ENCODE measurements at regions of chr15 and their contacts with region 1.

Region 1: GRCh38 chr15:91706322-91707032 is 147.0 kb upstream of the SLCO3A1 start:
- H3K4me3 ChIP-seq: no peak overlapping the region
- H3K27ac ChIP-seq: no peak overlapping the region
- H3K4me1 ChIP-seq: no peaks in the 10 kb centered on the region
- CTCF ChIP-seq: 0 out of 2 replicates have a peak, but pooled peaks have one; percentile 19

Region 2: DNA sequence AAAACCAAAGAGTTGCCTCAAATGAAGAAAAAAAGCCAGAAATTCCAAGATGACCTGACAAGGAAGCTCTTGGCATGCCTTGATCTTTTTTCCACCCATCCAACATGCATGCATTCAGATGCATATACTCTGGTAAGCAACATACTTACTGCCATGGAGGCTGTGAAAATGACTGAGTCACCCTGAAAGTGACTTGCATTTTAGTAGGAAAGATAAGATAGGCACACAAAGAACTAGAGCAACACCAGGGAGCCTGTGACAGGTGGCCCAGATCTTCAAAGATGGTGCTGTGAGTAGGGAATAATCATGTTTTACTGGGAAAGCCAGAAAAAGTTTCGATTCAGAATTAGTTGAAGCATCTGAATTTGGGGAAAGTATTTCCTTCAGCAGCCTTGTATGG is 38.1 kb before region 1 on chr15:
- CTCF ChIA-PET with region 1: interaction called, 15 read pairs
- POLR2A ChIA-PET with region 1: no interaction called
- H3K4me3 ChIP-seq: no peak overlapping the region
- H3K27ac ChIP-seq: no peak overlapping the region
- H3K4me1 ChIP-seq: no peaks in the 10 kb centered on the region
- CTCF ChIP-seq: no peak

Region 3: GRCh38 chr15:91694831-91695210 is 11.7 kb before region 1 on chr15:
- CTCF ChIA-PET with region 1: interaction called, 50 read pairs
- POLR2A ChIA-PET with region 1: no interaction called
- H3K4me3 ChIP-seq: no peak overlapping the region
- H3K27ac ChIP-seq: no peak overlapping the region
- H3K4me1 ChIP-seq: no peaks in the 10 kb centered on the region
- CTCF ChIP-seq: no peak

Region 4: DNA sequence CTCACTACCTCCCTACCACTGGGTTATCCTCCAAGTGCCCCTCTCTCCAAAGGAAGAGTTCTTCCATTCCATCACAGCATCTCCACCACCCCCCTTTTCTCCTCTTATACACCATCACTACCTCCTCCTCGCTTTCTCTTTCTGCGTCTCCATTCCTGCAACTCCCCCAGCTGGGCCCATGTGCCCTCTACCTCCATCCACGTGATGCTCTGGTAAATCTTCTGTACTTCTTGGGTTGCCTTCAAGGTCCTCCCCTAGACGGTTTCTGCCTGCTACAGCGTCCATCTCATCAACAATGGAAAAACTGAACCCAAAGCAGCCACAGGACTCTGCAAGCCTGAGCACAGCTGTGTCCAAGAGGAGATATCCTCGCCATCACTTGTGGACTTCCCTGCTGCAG is 17.5 kb after region 1 on chr15:
- CTCF ChIA-PET with region 1: interaction called, 38 read pairs
- POLR2A ChIA-PET with region 1: no interaction called
- H3K4me3 ChIP-seq: no peak overlapping the region
- H3K27ac ChIP-seq: no peak overlapping the region
- H3K4me1 ChIP-seq: no peaks in the 10 kb centered on the region
- CTCF ChIP-seq: no peak

Region 5: GRCh38 chr15:91852741-91853510 is 146.4 kb after region 1 on chr15:
- CTCF ChIA-PET with region 1: interaction called, 12 read pairs
- POLR2A ChIA-PET with region 1: no interaction called
- H3K4me3 ChIP-seq: peak overlapping the region; percentile 63
- H3K27ac ChIP-seq: peak overlapping the region; percentile 79
- H3K4me1 ChIP-seq: peaks cover 41% of the 10 kb centered on the region
- CTCF ChIP-seq: peak; percentile 69

Region 6: DNA sequence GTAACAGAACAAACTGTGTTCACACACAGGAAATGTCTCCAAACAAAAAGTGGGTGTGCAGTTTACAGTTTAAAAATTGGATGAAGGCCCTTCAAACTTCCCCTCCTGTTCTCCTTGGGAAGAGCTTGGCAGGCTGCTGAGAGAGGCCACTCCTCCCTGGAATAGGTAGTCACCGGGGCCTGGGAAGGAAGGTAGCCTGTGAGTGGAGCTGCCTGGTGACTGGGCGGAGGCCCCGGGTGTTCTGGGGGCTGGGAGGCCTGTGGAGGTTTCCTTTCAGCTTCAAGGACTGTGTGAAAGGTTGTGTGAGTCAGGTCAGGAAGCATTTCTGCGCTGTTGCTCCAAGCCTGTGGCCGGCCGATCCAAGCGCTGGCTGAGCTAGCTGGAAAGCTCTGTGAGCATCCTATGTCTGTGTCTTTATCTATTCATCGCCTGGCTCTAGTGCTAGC is 161.1 kb after region 1 on chr15:
- CTCF ChIA-PET with region 1: no interaction called
- POLR2A ChIA-PET with region 1: no interaction called
- H3K4me3 ChIP-seq: no peak overlapping the region
- H3K27ac ChIP-seq: no peak overlapping the region
- H3K4me1 ChIP-seq: no peaks in the 10 kb centered on the region; the same call in 1 of the 2 replicates
- CTCF ChIP-seq: no peak

Region 7: DNA sequence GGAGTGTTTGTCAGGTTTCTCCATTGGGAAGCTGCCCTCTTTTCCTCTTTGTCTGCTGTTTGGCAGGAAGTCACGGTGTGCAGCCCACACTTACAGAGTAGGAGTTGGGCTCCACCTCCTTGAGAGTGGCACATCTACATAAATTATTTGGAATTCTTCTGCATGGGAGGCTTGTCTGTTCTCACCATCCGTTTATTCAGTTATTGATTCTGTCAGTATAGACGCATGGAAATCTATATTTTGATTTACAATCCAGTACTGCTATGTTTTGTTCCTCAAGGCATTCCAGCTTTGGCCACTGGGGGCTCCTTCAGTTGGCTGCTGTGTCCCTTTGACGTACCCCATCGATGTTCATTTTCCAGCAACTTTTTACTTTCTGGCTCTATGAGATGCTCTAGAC is 347.4 kb after region 1 on chr15:
- CTCF ChIA-PET with region 1: no interaction called
- POLR2A ChIA-PET with region 1: no interaction called
- H3K4me3 ChIP-seq: no peak overlapping the region
- H3K27ac ChIP-seq: no peak overlapping the region
- H3K4me1 ChIP-seq: no peaks in the 10 kb centered on the region
- CTCF ChIP-seq: no peak